CD4-positive, alpha-beta memory T cell (primary cell): ENCODE measurements at regions of chr9 and their contacts with region 1.

Region 1: GRCh38 chr9:99057665-99058625 is 47.0 kb upstream of the TGFBR1 start:
- DNase-seq: peak; percentile 73 to 86 (median 81)
- H3K4me3 ChIP-seq: peak overlapping the region; percentile 7 to 71
- H3K4me3 Mint-ChIP-seq: peak overlapping the region; percentile 83 to 95 (median 88)
- H3K27ac ChIP-seq: peak overlapping the region; percentile 30
- H3K27ac Mint-ChIP-seq: peak overlapping the region; percentile 80 to 93 (median 86)
- H3K4me1 ChIP-seq: peaks cover 71% of the 10 kb centered on the region
- H3K4me1 Mint-ChIP-seq: peaks cover 59 to 92% (median 77%) of the 10 kb centered on the region in 4 donors
- H3K27me3 ChIP-seq: no peaks in the 10 kb centered on the region
- H3K27me3 Mint-ChIP-seq: no peaks in the 10 kb centered on the region

Region 2: DNA sequence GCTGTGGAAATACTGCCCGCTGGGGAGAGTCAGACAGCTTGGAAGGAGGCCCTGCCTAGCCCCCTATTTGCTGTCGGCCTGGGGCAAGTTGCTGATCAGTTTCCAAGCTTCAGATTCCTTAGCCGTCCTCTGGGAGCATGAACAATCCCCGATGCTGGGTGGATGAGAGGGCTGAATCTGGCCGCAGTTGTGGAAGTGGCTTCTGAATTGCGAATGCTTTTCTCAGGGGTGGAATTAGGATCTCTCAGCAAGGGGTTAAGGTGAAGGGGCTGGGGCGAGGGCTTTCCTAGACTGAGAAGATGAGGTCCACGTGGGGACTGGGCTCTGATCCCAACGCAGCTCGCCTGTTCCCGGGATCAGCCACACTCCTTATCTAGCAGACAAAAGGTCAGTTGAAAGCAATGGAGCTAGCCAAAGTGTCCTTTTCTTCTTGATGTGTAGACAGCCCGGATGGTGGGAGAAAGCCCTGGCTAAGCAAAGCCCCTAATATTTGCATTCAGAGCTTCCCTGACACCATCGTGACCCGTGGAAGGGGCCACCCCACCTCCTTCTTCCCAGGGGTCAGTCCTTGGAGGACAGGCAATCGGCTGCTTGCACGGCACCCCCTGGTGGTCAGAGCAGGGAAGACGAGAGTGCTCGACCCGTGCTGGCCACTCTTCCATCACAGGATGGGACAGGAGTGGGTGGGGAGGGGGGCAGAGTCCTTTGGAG is 59.3 kb before region 1 on chr9:
- CTCF ChIA-PET with region 1: interaction called, 14 read pairs
- POLR2A ChIA-PET with region 1: interaction called, 3 read pairs
- intact Hi-C with region 1: no loop called
- DNase-seq: peak; percentile 32 to 52 (median 40)
- H3K4me3 ChIP-seq: no peak overlapping the region
- H3K4me3 Mint-ChIP-seq: no peak overlapping the region
- H3K27ac ChIP-seq: no peak overlapping the region
- H3K27ac Mint-ChIP-seq: no peak overlapping the region
- H3K4me1 ChIP-seq: peaks cover 16% of the 10 kb centered on the region
- H3K4me1 Mint-ChIP-seq: peaks cover 15 to 25% (median 16%) of the 10 kb centered on the region in 4 donors
- H3K27me3 ChIP-seq: no peaks in the 10 kb centered on the region
- H3K27me3 Mint-ChIP-seq: peaks cover 0 to 5% of the 10 kb centered on the region in 2 donors

Region 3: GRCh38 chr9:99069075-99069474 is 11.1 kb after region 1 on chr9:
- CTCF ChIA-PET with region 1: no interaction called
- POLR2A ChIA-PET with region 1: interaction called, 58 read pairs
- intact Hi-C with region 1: no loop called
- DNase-seq: no peak
- H3K4me3 ChIP-seq: no peak overlapping the region
- H3K4me3 Mint-ChIP-seq: peak overlapping the region in 6 of 8 donors; percentile 12 to 73 (median 54)
- H3K27ac ChIP-seq: no peak overlapping the region
- H3K27ac Mint-ChIP-seq: peak overlapping the region; percentile 41 to 92 (median 81)
- H3K4me1 ChIP-seq: peaks cover 18% of the 10 kb centered on the region
- H3K4me1 Mint-ChIP-seq: peaks cover 27 to 75% (median 47%) of the 10 kb centered on the region in 4 donors
- H3K27me3 ChIP-seq: no peaks in the 10 kb centered on the region
- H3K27me3 Mint-ChIP-seq: no peaks in the 10 kb centered on the region

Region 4: DNA sequence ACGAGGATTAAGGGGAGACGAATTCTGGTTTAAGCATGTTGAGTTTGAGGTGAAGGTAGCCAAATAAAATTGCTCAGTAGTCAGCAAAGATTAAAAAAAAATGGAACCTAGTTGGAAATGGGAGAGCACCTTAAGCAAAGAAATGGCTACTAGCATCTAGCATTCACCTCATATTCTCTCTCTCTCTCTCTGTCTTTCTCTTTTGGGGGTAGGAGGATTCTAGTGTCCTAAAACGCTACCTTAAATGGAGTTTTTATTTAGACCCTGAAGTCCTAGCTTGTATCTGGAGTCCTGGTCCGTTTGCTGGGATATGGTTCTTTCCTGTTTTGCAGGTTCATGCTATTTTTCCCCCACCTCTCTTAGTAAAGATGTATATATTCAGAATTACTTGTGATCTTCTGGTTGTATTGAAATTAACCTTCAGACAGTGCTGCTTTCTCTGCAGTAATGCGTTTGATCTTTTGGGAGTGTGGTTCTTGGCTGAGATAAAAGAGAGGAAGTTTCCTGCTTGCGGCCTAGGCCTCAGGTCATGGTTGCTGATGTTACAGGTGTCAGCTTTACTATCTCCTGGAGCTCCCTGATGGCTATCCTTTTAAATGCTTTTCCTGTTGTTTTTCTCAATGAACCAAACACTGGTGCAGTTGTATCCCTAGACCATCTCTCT is 54.9 kb after region 1 on chr9:
- CTCF ChIA-PET with region 1: interaction called, 4 read pairs
- POLR2A ChIA-PET with region 1: interaction called, 82 read pairs
- intact Hi-C with region 1: loop called (anchors 1 kb)
- DNase-seq: peak; percentile 79 to 85 (median 80)
- H3K4me3 ChIP-seq: peak overlapping the region in 1 of 2 donors; percentile 35
- H3K4me3 Mint-ChIP-seq: peak overlapping the region; percentile 37 to 85 (median 72)
- H3K27ac ChIP-seq: peak overlapping the region; percentile 27
- H3K27ac Mint-ChIP-seq: peak overlapping the region; percentile 60 to 90 (median 79)
- H3K4me1 ChIP-seq: peaks cover 94% of the 10 kb centered on the region
- H3K4me1 Mint-ChIP-seq: peaks cover 75 to 95% (median 83%) of the 10 kb centered on the region in 4 donors
- H3K27me3 ChIP-seq: no peaks in the 10 kb centered on the region
- H3K27me3 Mint-ChIP-seq: no peaks in the 10 kb centered on the region

Region 5: DNA sequence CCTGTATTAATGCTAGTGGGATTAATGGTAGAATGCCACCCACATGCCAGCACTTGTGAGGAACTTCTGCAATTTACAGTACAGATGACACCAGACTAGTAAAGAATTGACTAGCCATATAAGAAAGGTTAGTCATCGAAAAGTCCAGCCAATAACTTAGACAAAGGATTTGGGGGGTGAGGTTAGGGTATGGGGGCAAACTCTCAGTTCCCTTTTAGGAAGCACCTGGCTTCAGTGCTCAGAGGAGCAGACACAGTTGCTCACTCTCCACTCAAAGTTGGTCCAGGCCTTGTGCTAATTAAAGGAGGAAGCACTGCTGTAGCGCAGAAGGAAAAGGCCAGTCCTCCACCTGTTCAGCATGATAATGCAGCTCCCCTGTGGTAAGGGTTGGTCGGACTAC is 72.1 kb after region 1 on chr9:
- CTCF ChIA-PET with region 1: no interaction called
- POLR2A ChIA-PET with region 1: interaction called, 21 read pairs
- intact Hi-C with region 1: loop called (anchors 2 kb)
- DNase-seq: no peak
- H3K4me3 ChIP-seq: no peak overlapping the region
- H3K4me3 Mint-ChIP-seq: peak overlapping the region in 1 of 8 donors; percentile 38
- H3K27ac ChIP-seq: no peak overlapping the region
- H3K27ac Mint-ChIP-seq: peak overlapping the region in 2 of 7 donors; percentile 12 to 63
- H3K4me1 ChIP-seq: peaks cover 82% of the 10 kb centered on the region
- H3K4me1 Mint-ChIP-seq: peaks cover 58 to 91% (median 76%) of the 10 kb centered on the region in 4 donors
- H3K27me3 ChIP-seq: no peaks in the 10 kb centered on the region
- H3K27me3 Mint-ChIP-seq: no peaks in the 10 kb centered on the region

Region 6: GRCh38 chr9:100838857-100839256 is 1780.9 kb after region 1 on chr9:
- CTCF ChIA-PET with region 1: no interaction called
- POLR2A ChIA-PET with region 1: no interaction called
- intact Hi-C with region 1: no loop called
- DNase-seq: no peak
- H3K4me3 ChIP-seq: no peak overlapping the region
- H3K4me3 Mint-ChIP-seq: no peak overlapping the region
- H3K27ac ChIP-seq: no peak overlapping the region
- H3K27ac Mint-ChIP-seq: no peak overlapping the region
- H3K4me1 ChIP-seq: no peaks in the 10 kb centered on the region
- H3K4me1 Mint-ChIP-seq: no peaks in the 10 kb centered on the region
- H3K27me3 ChIP-seq: no peaks in the 10 kb centered on the region
- H3K27me3 Mint-ChIP-seq: no peaks in the 10 kb centered on the region